ENCODE measurements at regions of chr5 and their contacts with region 1.

Region 1: DNA sequence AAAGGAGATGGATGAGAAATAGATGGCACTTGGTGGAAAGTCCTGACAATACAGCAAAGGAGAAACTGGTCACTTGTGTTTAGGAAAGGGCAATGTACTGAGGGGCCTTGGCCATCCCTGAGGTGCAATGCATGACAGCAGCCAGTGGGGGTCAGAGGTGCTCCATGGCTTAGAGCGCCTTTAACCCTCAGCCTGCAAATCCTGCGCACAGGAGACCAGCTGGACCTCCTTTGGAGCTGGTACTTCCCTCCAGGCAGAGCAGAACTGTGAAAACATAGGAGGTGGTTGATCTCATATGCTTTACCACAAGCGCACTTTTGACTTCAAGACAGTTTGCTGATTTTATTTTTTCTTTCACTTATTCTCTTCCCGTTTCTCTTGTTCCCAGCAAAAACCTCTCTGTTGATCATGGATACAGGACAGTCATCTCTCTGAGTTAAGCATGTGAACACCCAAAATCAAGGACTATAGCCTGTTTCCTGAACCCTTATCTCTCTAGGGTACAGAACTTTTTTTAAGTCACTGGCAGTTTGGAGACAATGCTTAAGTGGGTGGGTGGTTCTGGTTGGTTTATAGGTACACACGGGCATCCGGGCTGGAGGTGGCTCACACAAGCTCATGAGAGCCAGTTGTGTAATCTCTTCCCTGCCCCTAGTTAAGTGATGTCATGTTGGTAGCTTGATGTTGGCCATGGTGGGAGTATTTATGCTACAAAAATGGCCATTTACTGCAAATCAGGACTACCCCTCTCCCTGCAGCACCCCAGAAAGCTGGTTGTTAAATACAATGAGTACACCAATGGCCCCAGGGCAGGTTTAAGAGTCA is 37.6 kb upstream of the ANKRD55 start:
- DNase-seq: peak; percentile 90
- H3K4me3 ChIP-seq: no peak overlapping the region
- H3K27ac ChIP-seq: no peak overlapping the region
- H3K4me1 ChIP-seq: peaks cover 6% of the 10 kb centered on the region
- H3K27me3 ChIP-seq: no peaks in the 10 kb centered on the region
- CTCF ChIP-seq: peak; percentile 97
- POLR2A ChIP-seq: no peak

Region 2: GRCh38 chr5:55936100-55936693 is 334.6 kb before region 1 on chr5:
- CTCF ChIA-PET with region 1: interaction called, 95 read pairs
- POLR2A ChIA-PET with region 1: no interaction called
- dilution Hi-C with region 1: no loop called
- intact Hi-C with region 1: loop called (anchors 1 kb)
- DNase-seq: peak; percentile 88
- H3K4me3 ChIP-seq: no peak overlapping the region
- H3K27ac ChIP-seq: no peak overlapping the region
- H3K4me1 ChIP-seq: no peaks in the 10 kb centered on the region
- H3K27me3 ChIP-seq: no peaks in the 10 kb centered on the region
- CTCF ChIP-seq: peak; percentile 82 to 94
- POLR2A ChIP-seq: no peak

Region 3: GRCh38 chr5:56211298-56211865 is 59.4 kb before region 1 on chr5:
- CTCF ChIA-PET with region 1: interaction called, 7 read pairs
- POLR2A ChIA-PET with region 1: no interaction called
- dilution Hi-C with region 1: no loop called
- intact Hi-C with region 1: loop called (anchors 5 kb)
- DNase-seq: peak; percentile 86
- H3K4me3 ChIP-seq: no peak overlapping the region
- H3K27ac ChIP-seq: peak overlapping the region; percentile 83
- H3K4me1 ChIP-seq: peaks cover 43% of the 10 kb centered on the region
- H3K27me3 ChIP-seq: no peaks in the 10 kb centered on the region
- CTCF ChIP-seq: no peak
- POLR2A ChIP-seq: no peak

Region 4: DNA sequence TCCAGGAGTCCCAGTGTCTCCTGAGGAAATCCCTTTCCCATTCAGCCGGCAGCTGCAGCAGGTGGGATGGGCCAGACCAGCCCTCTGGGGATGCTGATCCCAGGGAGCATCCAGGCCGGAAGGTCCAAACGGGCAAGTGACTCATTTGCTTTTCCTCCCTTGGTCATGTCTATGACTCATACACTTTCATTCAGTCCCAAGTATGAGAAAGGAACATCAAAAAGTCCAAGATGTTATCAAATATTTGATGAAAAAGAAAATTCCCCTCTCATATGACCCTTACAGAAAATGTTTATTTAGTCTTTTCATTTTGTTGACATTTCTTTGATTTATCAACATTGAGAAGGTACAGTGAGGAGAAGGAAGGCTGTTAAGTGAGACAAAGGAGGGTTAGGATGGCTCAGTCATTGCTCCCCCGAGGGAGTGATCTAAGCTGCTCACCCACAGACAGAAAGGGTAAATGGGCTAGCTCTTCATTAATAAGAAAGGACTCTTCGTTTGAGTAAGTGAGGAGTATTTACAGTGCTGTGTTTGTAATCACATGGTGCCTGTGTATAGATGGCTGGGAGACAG is 79.9 kb after region 1 on chr5:
- CTCF ChIA-PET with region 1: interaction called, 15 read pairs
- POLR2A ChIA-PET with region 1: no interaction called
- dilution Hi-C with region 1: no loop called
- intact Hi-C with region 1: loop called (anchors 2 kb)
- DNase-seq: peak; percentile 98
- H3K4me3 ChIP-seq: no peak overlapping the region
- H3K27ac ChIP-seq: peak overlapping the region; percentile 92
- H3K4me1 ChIP-seq: peaks cover 28% of the 10 kb centered on the region
- H3K27me3 ChIP-seq: no peaks in the 10 kb centered on the region
- CTCF ChIP-seq: no peak
- POLR2A ChIP-seq: no peak

Region 5: DNA sequence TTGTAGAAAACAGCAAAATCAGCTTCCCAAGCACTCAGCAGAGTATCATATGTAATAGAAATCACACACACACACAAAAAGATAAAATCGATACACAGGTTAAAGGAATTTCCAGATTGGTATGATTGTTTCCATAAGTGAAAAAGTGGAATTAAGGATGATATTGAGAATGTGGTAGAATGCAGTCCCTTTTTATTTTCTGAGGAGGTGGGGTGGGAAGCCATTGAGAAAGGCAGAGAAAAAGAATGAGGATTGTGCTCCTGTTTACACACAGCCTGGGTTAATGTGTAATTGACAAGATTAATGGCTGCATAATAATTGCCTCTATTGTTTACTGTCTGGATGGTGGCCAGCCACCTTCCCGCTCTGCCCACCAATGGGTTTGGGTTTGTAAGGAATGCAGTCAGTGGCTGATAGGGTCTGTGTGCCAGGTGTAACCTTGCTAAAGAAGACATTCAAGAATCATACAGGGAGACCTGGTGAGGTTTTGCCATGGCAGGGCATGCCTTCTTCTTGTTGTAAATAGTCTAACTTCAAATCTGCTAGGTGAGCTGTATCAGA is 367.4 kb after region 1 on chr5:
- CTCF ChIA-PET with region 1: interaction called, 5 read pairs
- POLR2A ChIA-PET with region 1: no interaction called
- dilution Hi-C with region 1: no loop called
- intact Hi-C with region 1: loop called (anchors 5 kb)
- DNase-seq: peak; percentile 64
- H3K4me3 ChIP-seq: no peak overlapping the region
- H3K27ac ChIP-seq: no peak overlapping the region
- H3K4me1 ChIP-seq: peaks cover 17% of the 10 kb centered on the region
- H3K27me3 ChIP-seq: no peaks in the 10 kb centered on the region
- CTCF ChIP-seq: no peak
- POLR2A ChIP-seq: no peak

Region 6: DNA sequence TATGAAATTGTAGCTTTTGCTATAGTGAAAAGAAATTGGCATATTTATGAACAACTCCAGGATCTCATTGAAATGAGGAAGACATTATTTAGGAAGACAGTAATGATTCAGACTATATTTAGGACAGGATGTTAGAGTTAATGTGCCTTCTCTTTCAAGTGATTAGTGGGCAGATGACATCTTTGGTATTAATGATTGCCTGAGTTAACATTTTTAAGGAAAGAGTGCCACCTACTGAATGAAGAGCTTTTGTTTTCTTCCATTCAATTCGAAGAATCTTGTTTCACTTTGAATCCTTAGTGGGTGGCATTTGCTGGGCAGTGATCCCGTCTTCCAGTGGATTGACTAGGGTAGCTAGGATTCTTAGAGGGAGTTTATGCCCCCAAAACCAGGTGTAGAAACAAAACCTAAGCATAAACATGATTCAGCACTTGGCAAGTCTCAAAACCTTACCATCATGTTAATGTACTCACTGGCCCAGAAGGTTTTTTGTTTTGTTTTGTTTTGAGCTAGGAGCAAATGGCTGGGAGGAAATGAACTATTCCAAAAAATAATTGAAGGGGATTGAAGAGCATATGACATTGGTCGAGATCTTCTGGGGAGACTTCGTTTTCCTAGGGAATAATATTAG is 567.7 kb after region 1 on chr5:
- CTCF ChIA-PET with region 1: interaction called, 277 read pairs
- POLR2A ChIA-PET with region 1: interaction called, 5 read pairs
- dilution Hi-C with region 1: no loop called
- intact Hi-C with region 1: loop called (anchors 1 kb)
- DNase-seq: peak; percentile 84
- H3K4me3 ChIP-seq: peak overlapping the region in 1 of 3 experiments; percentile 62
- H3K27ac ChIP-seq: peak overlapping the region; percentile 69
- H3K4me1 ChIP-seq: peaks cover 17% of the 10 kb centered on the region
- H3K27me3 ChIP-seq: no peaks in the 10 kb centered on the region
- CTCF ChIP-seq: peak; percentile 14 to 29
- POLR2A ChIP-seq: no peak

Region 7: GRCh38 chr5:57221049-57221568 is 950.3 kb after region 1 on chr5:
- CTCF ChIA-PET with region 1: no interaction called
- POLR2A ChIA-PET with region 1: no interaction called
- dilution Hi-C with region 1: no loop called
- intact Hi-C with region 1: loop called (anchors 2 kb)
- DNase-seq: peak; percentile 83
- H3K4me3 ChIP-seq: no peak overlapping the region
- H3K27ac ChIP-seq: no peak overlapping the region
- H3K4me1 ChIP-seq: peaks cover 3% of the 10 kb centered on the region
- H3K27me3 ChIP-seq: no peaks in the 10 kb centered on the region
- CTCF ChIP-seq: peak; percentile 38 to 45
- POLR2A ChIP-seq: no peak

Measured in endothelial cell of umbilical vein (primary cell).